Naive thymus-derived CD4-positive, alpha-beta T cell (primary cell): ENCODE measurements at regions of chr12 and their contacts with region 1.

Region 1: DNA sequence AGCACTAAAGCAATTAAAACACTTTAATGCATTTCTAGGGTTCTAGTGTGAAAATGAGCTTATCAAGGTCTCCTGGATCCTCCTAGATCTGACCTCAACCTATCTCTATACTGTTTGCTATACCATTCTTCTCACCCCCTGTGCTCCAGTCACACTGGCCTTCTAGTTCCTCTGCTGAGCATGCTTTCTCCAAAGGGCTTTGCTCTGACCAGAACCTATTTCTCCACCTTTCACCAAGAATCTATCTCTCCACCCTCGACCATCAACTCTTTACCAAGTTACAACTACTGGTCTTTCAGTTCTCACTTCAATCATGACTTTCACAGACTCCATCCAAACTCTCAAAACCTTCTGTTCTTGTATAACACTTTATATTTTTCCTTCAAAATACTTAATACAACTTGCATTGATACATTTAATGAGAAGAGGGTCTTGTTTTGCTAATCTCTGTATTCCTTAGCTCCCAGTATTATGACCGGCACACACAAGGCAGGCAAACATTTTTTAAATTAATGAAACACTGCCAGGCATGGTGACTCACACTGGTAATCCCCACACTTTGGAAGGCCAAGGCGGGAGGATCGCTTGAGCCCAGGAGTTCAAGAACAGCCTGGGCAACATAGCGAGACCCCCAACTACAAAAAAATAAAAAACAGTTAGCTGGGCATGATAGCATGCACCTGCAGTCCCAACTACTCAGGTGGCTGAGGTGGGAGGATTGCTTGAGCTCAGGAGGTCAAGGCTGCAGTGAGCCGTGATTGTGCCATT is 22.8 kb downstream of the PPP1R12A start:
- DNase-seq: no peak
- ATAC-seq: no peak
- H3K4me3 ChIP-seq: no peak overlapping the region
- H3K4me3 Mint-ChIP-seq: peak overlapping the region in 4 of 10 donors; percentile 4 to 52 (median 20)
- H3K27ac ChIP-seq: no peak overlapping the region
- H3K27ac Mint-ChIP-seq: peak overlapping the region in 8 of 9 donors; percentile 0 to 53 (median 22)
- H3K4me1 ChIP-seq: peaks cover 4 to 27% of the 10 kb centered on the region in 2 donors
- H3K4me1 Mint-ChIP-seq: peaks cover 41 to 89% (median 76%) of the 10 kb centered on the region in 7 donors
- H3K27me3 ChIP-seq: no peaks in the 10 kb centered on the region
- H3K27me3 Mint-ChIP-seq: no peaks in the 10 kb centered on the region

Region 2: GRCh38 chr12:79897617-79898016 is 14.5 kb before region 1 on chr12:
- CTCF ChIA-PET with region 1: no interaction called
- POLR2A ChIA-PET with region 1: interaction called, 3 read pairs
- intact Hi-C with region 1: loop called in 1 of 2 experiments (anchors 2 kb)
- DNase-seq: no peak
- ATAC-seq: no peak
- H3K4me3 ChIP-seq: no peak overlapping the region
- H3K4me3 Mint-ChIP-seq: peak overlapping the region in 3 of 10 donors; percentile 21 to 66 (median 39)
- H3K27ac ChIP-seq: no peak overlapping the region
- H3K27ac Mint-ChIP-seq: peak overlapping the region in 3 of 9 donors; percentile 16 to 41 (median 25)
- H3K4me1 ChIP-seq: peaks cover 3 to 11% of the 10 kb centered on the region in 2 donors
- H3K4me1 Mint-ChIP-seq: peaks cover 23 to 91% (median 83%) of the 10 kb centered on the region in 7 donors
- H3K27me3 ChIP-seq: no peaks in the 10 kb centered on the region
- H3K27me3 Mint-ChIP-seq: no peaks in the 10 kb centered on the region

Region 3: GRCh38 chr12:79927772-79928474 is 15.8 kb after region 1 on chr12:
- CTCF ChIA-PET with region 1: no interaction called
- POLR2A ChIA-PET with region 1: no interaction called
- intact Hi-C with region 1: loop called in 1 of 2 experiments (anchors 2 kb)
- DNase-seq: peak in 8 of 9 donors; percentile 29 to 72 (median 62)
- ATAC-seq: peak; percentile 98
- H3K4me3 ChIP-seq: no peak overlapping the region
- H3K4me3 Mint-ChIP-seq: peak overlapping the region in 8 of 10 donors; percentile 1 to 61 (median 40)
- H3K27ac ChIP-seq: peak overlapping the region; percentile 25
- H3K27ac Mint-ChIP-seq: peak overlapping the region; percentile 1 to 87 (median 76)
- H3K4me1 ChIP-seq: peaks cover 33 to 34% of the 10 kb centered on the region in 2 donors
- H3K4me1 Mint-ChIP-seq: peaks cover 41 to 82% (median 68%) of the 10 kb centered on the region in 7 donors
- H3K27me3 ChIP-seq: no peaks in the 10 kb centered on the region
- H3K27me3 Mint-ChIP-seq: no peaks in the 10 kb centered on the region

Region 4: DNA sequence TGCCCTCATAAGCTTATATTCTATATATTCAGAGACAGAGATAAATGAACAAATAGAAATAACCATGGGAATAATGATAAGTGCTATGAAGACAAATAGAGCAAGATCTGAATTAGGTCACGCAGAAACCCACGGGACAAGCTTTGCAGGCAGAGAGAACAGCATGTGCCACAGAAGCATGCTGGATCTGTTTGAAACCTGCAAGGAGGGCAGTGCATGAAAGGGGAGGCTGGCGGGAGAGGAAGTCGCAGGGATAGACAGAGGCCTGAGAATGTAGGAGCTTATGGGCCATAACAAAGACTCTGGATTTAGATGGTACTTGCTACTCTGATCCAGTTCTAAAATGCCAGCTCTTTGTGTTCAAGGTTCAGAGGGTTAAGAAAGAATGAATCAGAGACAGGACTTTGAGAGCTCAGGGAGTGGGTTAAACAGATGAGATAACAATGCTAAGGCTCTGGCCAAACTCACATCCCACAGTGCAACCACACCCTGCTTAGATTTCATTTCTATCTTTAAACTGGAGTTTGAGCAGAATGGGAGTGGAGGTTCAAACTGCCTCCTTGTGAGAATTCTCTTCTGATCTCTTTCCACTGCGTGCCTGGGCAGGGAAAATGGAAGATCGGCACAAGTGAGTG is 72.0 kb after region 1 on chr12:
- CTCF ChIA-PET with region 1: interaction called, 10 read pairs
- POLR2A ChIA-PET with region 1: no interaction called
- intact Hi-C with region 1: no loop called
- DNase-seq: no peak
- ATAC-seq: no peak
- H3K4me3 ChIP-seq: no peak overlapping the region
- H3K4me3 Mint-ChIP-seq: no peak overlapping the region
- H3K27ac ChIP-seq: no peak overlapping the region
- H3K27ac Mint-ChIP-seq: no peak overlapping the region
- H3K4me1 ChIP-seq: no peaks in the 10 kb centered on the region
- H3K4me1 Mint-ChIP-seq: peaks cover 0 to 3% (median 0%) of the 10 kb centered on the region in 7 donors
- H3K27me3 ChIP-seq: no peaks in the 10 kb centered on the region
- H3K27me3 Mint-ChIP-seq: peaks cover 4 to 25% (median 25%) of the 10 kb centered on the region in 5 donors